MCF 10A (cell line): ENCODE measurements at regions of chr14 and their contacts with region 1.

Region 1: DNA sequence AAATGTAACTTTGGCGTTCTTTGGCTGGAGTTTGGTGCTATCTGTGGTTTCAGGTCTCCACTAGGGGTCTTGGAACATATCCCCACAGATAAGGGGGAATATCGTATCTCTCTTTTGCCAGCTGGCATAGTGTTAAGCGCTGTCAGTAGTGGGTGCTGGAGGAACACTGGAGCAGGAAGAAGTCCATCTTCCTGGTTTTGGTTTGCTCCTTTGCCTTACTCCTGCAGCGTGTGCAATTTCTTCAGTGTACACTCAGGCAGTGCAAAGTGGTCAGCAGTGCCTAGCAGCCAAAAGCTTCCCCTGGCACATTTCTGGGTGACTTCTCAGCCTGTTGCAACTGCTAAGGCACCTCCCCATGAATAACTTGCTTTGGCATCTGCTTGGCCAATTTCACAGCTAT is 11.7 kb upstream of the RIPK3 start:
- DNase-seq: peak; percentile 45
- H3K4me3 Mint-ChIP-seq: no peak overlapping the region
- H3K27ac Mint-ChIP-seq: no peak overlapping the region
- H3K4me1 Mint-ChIP-seq: peaks cover 18% of the 10 kb centered on the region
- H3K27me3 Mint-ChIP-seq: peaks cover 16% of the 10 kb centered on the region
- CTCF ChIP-seq: no peak

Region 2: DNA sequence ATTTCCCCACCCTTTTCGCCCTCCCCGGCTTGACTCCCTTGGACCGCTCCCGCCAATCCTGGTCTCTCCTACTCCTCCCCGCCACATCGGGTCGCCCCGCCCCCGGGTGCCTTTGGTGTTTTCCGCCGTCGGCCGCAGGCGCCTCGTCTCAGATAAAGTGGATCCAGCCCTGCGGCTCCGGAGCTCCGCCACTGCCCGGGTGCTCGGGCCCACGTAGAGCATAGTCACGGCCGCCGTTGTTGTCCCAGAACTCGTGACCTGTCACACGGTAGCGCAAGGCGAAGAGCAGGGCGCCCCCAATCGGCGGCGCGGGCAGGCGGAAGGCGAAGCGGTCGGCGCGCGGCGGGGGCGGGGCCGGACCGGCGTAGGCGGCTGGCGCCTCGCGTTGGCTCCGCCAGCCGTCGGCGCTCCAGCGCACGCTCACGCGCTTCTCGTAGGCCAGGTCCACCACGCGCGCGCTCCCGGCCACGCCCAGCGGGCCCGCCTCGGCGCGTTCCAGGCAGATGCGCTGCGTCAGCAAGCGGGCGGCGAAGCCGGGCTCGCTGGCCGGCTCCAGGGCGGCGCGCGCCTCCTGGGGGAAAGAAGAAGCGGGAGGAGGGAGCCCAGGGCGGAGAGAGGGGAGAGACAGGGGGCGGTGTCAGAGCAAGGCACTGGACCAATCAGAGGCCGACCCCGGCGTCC is 1050.1 kb before region 1 on chr14:
- CTCF ChIA-PET with region 1: no interaction called
- POLR2A ChIA-PET with region 1: no interaction called
- intact Hi-C with region 1: no loop called
- DNase-seq: peak; percentile 97
- H3K4me3 Mint-ChIP-seq: peak overlapping the region; percentile 95
- H3K27ac Mint-ChIP-seq: peak overlapping the region; percentile 97
- H3K4me1 Mint-ChIP-seq: peaks cover 25% of the 10 kb centered on the region
- H3K27me3 Mint-ChIP-seq: no peaks in the 10 kb centered on the region
- CTCF ChIP-seq: peak; percentile 79

Region 3: GRCh38 chr14:24366721-24367513 is 15.4 kb after region 1 on chr14:
- CTCF ChIA-PET with region 1: interaction called, 13 read pairs
- POLR2A ChIA-PET with region 1: interaction called, 4 read pairs
- intact Hi-C with region 1: no loop called
- DNase-seq: peak; percentile 97
- H3K4me3 Mint-ChIP-seq: peak overlapping the region; percentile 75
- H3K27ac Mint-ChIP-seq: peak overlapping the region; percentile 96
- H3K4me1 Mint-ChIP-seq: peaks cover 24% of the 10 kb centered on the region
- H3K27me3 Mint-ChIP-seq: no peaks in the 10 kb centered on the region
- CTCF ChIP-seq: no peak

Region 4: DNA sequence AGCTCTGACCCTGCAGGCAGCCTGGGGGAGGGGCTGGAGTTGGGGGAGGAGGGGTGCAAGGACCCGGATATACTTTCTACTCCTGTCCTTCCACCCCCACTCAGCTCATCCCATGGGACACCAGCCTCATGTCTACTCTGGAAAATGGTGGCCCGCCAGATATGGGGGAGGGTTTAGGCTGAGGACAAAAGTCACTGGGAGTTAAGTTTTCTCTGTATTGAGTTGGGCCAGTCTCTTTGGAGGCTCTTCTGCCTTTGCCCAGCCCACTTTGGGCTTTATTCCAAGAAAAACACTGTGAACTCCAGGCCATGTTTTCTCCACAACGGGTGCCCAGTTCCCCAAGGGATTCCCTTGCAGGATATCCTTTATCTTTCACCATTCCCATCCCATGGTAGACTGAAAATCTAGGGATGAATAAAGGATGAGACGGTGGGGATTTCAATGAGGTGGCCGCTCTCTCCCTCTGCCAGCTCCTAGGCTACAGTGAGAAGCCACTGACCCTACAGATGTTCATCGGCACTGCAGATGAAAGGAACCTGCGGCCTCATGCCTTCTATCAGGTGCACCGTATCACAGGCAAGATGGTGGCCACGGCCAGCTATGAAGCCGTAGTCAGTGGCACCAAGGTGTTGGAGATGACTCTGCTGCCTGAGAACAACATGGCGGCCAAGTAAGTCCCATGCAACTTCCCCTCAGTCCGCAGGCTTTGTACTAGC is 21.3 kb after region 1 on chr14:
- CTCF ChIA-PET with region 1: interaction called, 4 read pairs
- POLR2A ChIA-PET with region 1: interaction called, 12 read pairs
- intact Hi-C with region 1: no loop called
- DNase-seq: peak; percentile 57
- H3K4me3 Mint-ChIP-seq: no peak overlapping the region
- H3K27ac Mint-ChIP-seq: no peak overlapping the region
- H3K4me1 Mint-ChIP-seq: no peaks in the 10 kb centered on the region
- H3K27me3 Mint-ChIP-seq: no peaks in the 10 kb centered on the region
- CTCF ChIP-seq: no peak

Region 5: GRCh38 chr14:24442273-24443052 is 90.9 kb after region 1 on chr14 and contains the start of gene SDR39U1:
- CTCF ChIA-PET with region 1: interaction called, 34 read pairs
- POLR2A ChIA-PET with region 1: interaction called, 11 read pairs
- intact Hi-C with region 1: no loop called
- DNase-seq: peak; percentile 99
- H3K4me3 Mint-ChIP-seq: peak within 1 kb of the TSS; percentile 78
- H3K27ac Mint-ChIP-seq: peak within 1 kb of the TSS; percentile 100
- H3K4me1 Mint-ChIP-seq: peaks cover 8% of the 10 kb centered on the region
- H3K27me3 Mint-ChIP-seq: no peaks in the 10 kb centered on the region
- CTCF ChIP-seq: no peak
- total RNA-seq, gene SDR39U1: 53.2 and 58.7 TPM in 2 replicates

Region 6: GRCh38 chr14:25602106-25602505 is 1250.6 kb after region 1 on chr14:
- CTCF ChIA-PET with region 1: no interaction called
- POLR2A ChIA-PET with region 1: no interaction called
- intact Hi-C with region 1: no loop called
- DNase-seq: no peak
- H3K4me3 Mint-ChIP-seq: no peak overlapping the region
- H3K27ac Mint-ChIP-seq: no peak overlapping the region
- H3K4me1 Mint-ChIP-seq: no peaks in the 10 kb centered on the region
- H3K27me3 Mint-ChIP-seq: no peaks in the 10 kb centered on the region
- CTCF ChIP-seq: no peak